ENCODE measurements at regions of chr10 and their contacts with region 1.

Region 1: GRCh38 chr10:75235375-75236177 is at the start of gene COMTD1:
- DNase-seq: peak; percentile 82
- ATAC-seq: peak; percentile 88
- H3K4me3 ChIP-seq: peak within 1 kb of the TSS; percentile 57
- H3K27ac ChIP-seq: peak within 1 kb of the TSS; percentile 17
- H3K4me1 ChIP-seq: peaks cover 10% of the 10 kb centered on the region
- H3K27me3 ChIP-seq: no peaks in the 10 kb centered on the region
- CTCF ChIP-seq: peak; percentile 100; the same call in 1 of the 2 replicates
- POLR2A ChIP-seq: 0 out of 2 replicates have a peak, but pooled peaks have one; percentile 57
- RAD21 ChIP-seq: peak; percentile 99
- total RNA-seq, gene COMTD1: 1.4 and 1.6 TPM in 2 replicates

Region 2: DNA sequence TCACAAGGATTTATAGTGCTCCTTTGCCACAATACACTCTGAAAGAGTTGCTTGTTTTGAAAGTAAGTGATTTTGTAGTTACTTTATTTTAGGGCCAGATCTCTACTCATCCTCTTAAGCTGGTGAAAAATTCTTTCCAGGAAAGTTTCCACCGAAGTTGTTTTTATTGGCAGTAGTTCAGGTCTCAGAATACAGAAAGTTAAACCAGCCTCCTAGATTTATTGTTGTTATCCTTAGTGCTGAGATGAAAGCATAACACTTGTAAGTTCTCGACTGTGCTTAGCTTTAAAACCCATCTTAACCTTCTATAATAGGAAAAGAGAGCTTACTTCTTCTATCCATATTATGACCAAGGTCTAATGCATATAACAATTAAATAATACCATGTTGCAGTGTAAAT is 1090.4 kb before region 1 on chr10:
- CTCF ChIA-PET with region 1: no interaction called
- POLR2A ChIA-PET with region 1: no interaction called
- dilution Hi-C with region 1: no loop called
- in situ Hi-C with region 1: no loop called
- intact Hi-C with region 1: loop called (anchors 10 kb)
- DNase-seq: peak; percentile 89
- ATAC-seq: peak; percentile 94
- H3K4me3 ChIP-seq: no peak overlapping the region
- H3K27ac ChIP-seq: no peak overlapping the region
- H3K4me1 ChIP-seq: peaks cover 3% of the 10 kb centered on the region
- H3K27me3 ChIP-seq: no peaks in the 10 kb centered on the region
- CTCF ChIP-seq: no peak
- POLR2A ChIP-seq: no peak
- RAD21 ChIP-seq: no peak

Region 3: DNA sequence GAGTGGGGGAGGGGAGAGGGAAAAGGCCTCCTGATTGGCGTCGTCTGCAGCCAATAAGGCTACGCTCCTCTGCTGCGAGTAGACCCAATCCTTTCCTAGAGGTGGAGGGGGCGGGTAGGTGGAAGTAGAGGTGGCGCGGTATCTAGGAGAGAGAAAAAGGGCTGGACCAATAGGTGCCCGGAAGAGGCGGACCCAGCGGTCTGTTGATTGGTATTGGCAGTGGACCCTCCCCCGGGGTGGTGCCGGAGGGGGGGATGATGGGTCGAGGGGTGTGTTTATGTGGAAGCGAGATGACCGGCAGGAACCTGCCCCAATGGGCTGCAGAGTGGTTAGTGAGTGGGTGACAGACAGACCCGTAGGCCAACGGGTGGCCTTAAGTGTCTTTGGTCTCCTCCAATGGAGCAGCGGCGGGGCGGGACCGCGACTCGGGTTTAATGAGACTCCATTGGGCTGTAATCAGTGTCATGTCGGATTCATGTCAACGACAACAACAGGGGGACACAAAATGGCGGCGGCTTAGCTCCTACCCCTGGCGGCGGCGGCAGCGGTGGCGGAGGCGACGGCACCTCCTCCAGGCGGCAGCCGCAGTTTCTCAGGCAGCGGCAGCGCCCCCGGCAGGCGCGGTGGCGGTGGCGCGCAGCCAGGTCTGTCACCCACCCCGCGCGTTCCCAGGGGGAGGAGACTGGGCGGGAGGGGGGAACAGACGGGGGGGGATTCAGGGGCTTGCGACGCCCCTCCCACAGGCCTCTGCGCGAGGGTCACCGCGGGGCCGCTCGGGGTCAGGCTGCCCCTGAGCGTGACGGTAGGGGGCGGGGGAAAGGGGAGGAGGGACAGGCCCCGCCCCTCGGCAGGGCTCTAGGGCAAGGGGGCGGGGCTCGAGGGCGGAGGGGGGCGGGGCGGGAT is 409.2 kb before region 1 on chr10 and contains the start of gene KAT6B:
- CTCF ChIA-PET with region 1: interaction called, 3 read pairs
- POLR2A ChIA-PET with region 1: no interaction called
- dilution Hi-C with region 1: no loop called
- in situ Hi-C with region 1: no loop called
- intact Hi-C with region 1: loop called (anchors 10 kb)
- DNase-seq: peak; percentile 100
- ATAC-seq: peak; percentile 87
- H3K4me3 ChIP-seq: peak within 1 kb of the TSS; percentile 97
- H3K27ac ChIP-seq: peak within 1 kb of the TSS; percentile 87
- H3K4me1 ChIP-seq: peaks cover 20% of the 10 kb centered on the region
- H3K27me3 ChIP-seq: no peaks in the 10 kb centered on the region
- CTCF ChIP-seq: peak; percentile 33
- POLR2A ChIP-seq: peak; percentile 79; the same call in 1 of the 2 replicates
- RAD21 ChIP-seq: peak; percentile 26; the same call in 1 of the 2 replicates
- total RNA-seq, gene KAT6B: 27.8 and 28.1 TPM in 2 replicates

Region 4: GRCh38 chr10:75021379-75022249 is 214.0 kb before region 1 on chr10:
- CTCF ChIA-PET with region 1: interaction called, 3 read pairs
- POLR2A ChIA-PET with region 1: no interaction called
- dilution Hi-C with region 1: no loop called
- in situ Hi-C with region 1: loop called (anchors 10 kb)
- intact Hi-C with region 1: loop called (anchors 5 kb)
- DNase-seq: peak; percentile 20
- ATAC-seq: peak; percentile 38
- H3K4me3 ChIP-seq: no peak overlapping the region
- H3K27ac ChIP-seq: peak overlapping the region; percentile 30; the same call in 1 of the 2 replicates
- H3K4me1 ChIP-seq: peaks cover 7% of the 10 kb centered on the region
- H3K27me3 ChIP-seq: no peaks in the 10 kb centered on the region
- CTCF ChIP-seq: no peak
- POLR2A ChIP-seq: no peak
- RAD21 ChIP-seq: no peak

Region 5: GRCh38 chr10:75111367-75111906 is 124.1 kb before region 1 on chr10 and contains the start of gene SAMD8:
- CTCF ChIA-PET with region 1: interaction called, 6 read pairs
- POLR2A ChIA-PET with region 1: no interaction called
- dilution Hi-C with region 1: no loop called
- in situ Hi-C with region 1: loop called (anchors 5 kb)
- intact Hi-C with region 1: loop called (anchors 1 kb)
- DNase-seq: peak; percentile 95
- ATAC-seq: peak; percentile 91
- H3K4me3 ChIP-seq: peak within 1 kb of the TSS; percentile 98
- H3K27ac ChIP-seq: peak within 1 kb of the TSS; percentile 96
- H3K4me1 ChIP-seq: peaks cover 2% of the 10 kb centered on the region; the same call in 1 of the 2 replicates
- H3K27me3 ChIP-seq: no peaks in the 10 kb centered on the region
- CTCF ChIP-seq: no peak
- POLR2A ChIP-seq: peak; percentile 90
- RAD21 ChIP-seq: no peak
- total RNA-seq, gene SAMD8: 28.7 and 34.2 TPM in 2 replicates

Region 6: DNA sequence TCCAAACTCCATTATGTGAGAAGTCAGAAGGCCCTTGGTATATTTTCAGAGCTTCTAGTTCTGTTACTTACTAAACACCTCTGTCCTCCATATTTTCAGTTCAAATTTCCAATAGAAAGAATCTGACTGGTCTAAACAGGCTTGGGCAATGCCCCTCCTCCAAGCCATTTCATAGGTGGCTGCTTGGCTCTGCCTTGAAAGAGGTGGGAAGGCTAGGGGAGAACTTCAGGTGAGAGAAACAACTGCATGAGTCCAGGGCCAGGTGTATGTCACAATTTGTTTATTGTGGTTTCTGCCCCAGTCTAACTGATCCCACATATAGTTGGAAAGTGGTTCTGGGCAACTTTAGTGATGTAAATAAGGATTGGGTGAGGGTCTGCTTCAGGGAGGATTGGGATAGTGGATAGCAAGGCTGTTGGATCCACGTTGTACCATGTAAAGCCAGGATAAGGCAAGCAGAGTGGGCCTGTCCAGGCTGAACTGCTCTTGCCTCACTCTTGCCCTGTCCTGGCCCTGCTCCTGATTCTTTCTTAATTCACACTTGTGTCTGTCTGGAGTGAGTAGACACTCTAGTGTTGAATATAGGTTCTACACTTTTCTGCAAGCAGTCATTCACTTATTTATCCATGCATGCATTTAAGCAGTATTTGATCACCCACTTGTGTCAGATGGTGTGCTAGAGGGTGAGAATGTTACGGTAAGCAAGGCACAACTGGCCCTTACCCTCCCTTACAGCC is 67.6 kb after region 1 on chr10:
- CTCF ChIA-PET with region 1: no interaction called
- POLR2A ChIA-PET with region 1: no interaction called
- dilution Hi-C with region 1: no loop called
- in situ Hi-C with region 1: no loop called
- intact Hi-C with region 1: loop called (anchors 5 kb)
- DNase-seq: no peak
- ATAC-seq: peak; percentile 48
- H3K4me3 ChIP-seq: no peak overlapping the region
- H3K27ac ChIP-seq: peak overlapping the region; percentile 82; the same call in 1 of the 2 replicates
- H3K4me1 ChIP-seq: peaks cover 6% of the 10 kb centered on the region; the same call in 1 of the 2 replicates
- H3K27me3 ChIP-seq: no peaks in the 10 kb centered on the region
- CTCF ChIP-seq: 0 out of 2 replicates have a peak, but pooled peaks have one; percentile 15
- POLR2A ChIP-seq: no peak
- RAD21 ChIP-seq: no peak; the same call in 1 of the 2 replicates